ENCODE measurements at regions of chr1 and their contacts with region 1.

Region 1: DNA sequence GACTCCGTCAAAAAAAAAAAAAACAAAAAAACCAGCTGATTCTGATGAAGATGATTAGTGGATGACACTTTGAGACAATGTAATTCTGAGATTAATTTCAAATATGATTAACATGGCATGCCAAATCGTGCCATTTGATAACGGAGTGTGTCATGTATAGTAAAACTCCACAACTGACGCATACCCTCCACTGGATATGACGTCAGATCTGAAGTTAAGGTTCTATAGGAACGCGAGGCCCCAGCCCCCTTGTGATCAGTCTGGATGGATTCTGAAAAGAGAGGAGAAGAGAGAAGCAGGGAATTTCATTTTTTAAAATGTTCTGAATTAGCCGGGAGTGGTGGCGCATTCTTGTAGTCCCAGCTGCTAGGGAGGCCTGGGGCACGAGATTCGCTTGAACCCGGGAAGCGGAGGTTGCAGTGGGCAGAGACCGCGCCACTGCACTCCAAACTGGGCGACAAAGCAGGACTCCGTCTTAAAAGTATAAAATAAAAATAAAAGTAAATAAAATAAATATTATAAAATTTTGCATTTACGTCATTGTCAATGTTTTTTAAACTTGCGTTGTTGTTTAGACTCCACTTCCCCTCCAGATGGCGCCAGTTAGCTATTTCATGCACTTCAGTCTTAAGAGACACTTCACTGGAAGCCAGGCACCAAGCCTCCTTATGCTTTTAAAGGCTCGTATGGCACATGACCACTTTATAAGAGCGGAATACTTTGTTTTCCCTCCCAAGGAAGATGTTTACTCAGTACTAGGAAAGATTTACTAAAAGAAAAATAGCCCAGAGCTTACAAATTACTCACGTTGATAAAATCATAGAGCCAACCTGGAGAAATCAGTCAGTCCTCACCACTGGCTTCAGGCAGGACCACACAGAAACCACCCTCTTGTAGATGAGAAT is 65.5 kb downstream of the UBE2U start:
- DNase-seq: peak in 1 of 2 donors; percentile 65
- H3K4me3 ChIP-seq: no peak overlapping the region
- CTCF ChIP-seq: peak in 1 of 3 donors; percentile 77
- POLR2A ChIP-seq: no peak

Region 2: GRCh38 chr1:64645741-64646140 is 376.8 kb after region 1 on chr1:
- intact Hi-C with region 1: loop called (anchors 5 kb)
- DNase-seq: no peak
- H3K4me3 ChIP-seq: no peak overlapping the region
- CTCF ChIP-seq: no peak
- POLR2A ChIP-seq: no peak

Region 3: DNA sequence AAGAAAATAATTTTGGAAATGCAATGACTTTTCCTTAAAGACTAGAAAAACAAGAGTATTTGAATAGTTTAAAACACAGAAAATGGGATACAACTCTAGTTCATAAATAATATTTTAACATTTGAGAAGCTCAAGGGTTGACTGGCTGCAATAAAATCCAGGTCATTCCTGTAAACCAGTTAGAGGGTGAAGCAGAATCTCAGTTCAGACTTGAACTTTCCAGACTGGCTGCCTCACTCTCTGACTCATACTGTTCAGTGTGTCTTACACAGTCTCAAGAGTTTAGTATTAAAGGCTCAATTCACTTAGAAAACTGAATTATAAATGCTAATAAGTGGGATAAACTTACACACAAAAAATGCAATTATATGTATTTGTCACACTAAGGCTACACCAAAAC is 565.8 kb after region 1 on chr1:
- intact Hi-C with region 1: loop called (anchors 10 kb)
- DNase-seq: no peak
- H3K4me3 ChIP-seq: no peak overlapping the region
- CTCF ChIP-seq: no peak
- POLR2A ChIP-seq: no peak

Measured in lower leg skin (tissue), 4 donors.